ENCODE measurements at regions of chr12 and their contacts with region 1.

Region 1: GRCh38 chr12:100573292-100574186 is at the start of gene GAS2L3:
- DNase-seq: peak; percentile 91
- H3K4me3 ChIP-seq: peak within 1 kb of the TSS; percentile 57 to 66 (median 62)
- H3K27ac ChIP-seq: peak within 1 kb of the TSS; percentile 77 to 90 (median 87)
- H3K4me1 ChIP-seq: peaks cover 0 to 26% (median 10%) of the 10 kb centered on the region in 4 donors
- H3K27me3 ChIP-seq: no peaks in the 10 kb centered on the region
- CTCF ChIP-seq: no peak
- EP300 ChIP-seq: no peak
- POLR2A ChIP-seq: peak; percentile 91
- total RNA-seq, gene GAS2L3: 0.80 to 15.7 (median 7.6) TPM

Region 2: GRCh38 chr12:100632445-100632892 is 58.9 kb after region 1 on chr12:
- in situ Hi-C with region 1: no loop called
- intact Hi-C with region 1: no loop called
- DNase-seq: no peak
- H3K4me3 ChIP-seq: no peak overlapping the region
- H3K27ac ChIP-seq: peak overlapping the region in 3 of 4 donors; percentile 42 to 61 (median 57)
- H3K4me1 ChIP-seq: peaks cover 0 to 18% (median 7%) of the 10 kb centered on the region in 4 donors
- H3K27me3 ChIP-seq: no peaks in the 10 kb centered on the region
- CTCF ChIP-seq: no peak
- EP300 ChIP-seq: no peak
- POLR2A ChIP-seq: no peak

Region 3: GRCh38 chr12:100668945-100669536 is 95.5 kb after region 1 on chr12:
- in situ Hi-C with region 1: loop called in 1 of 4 experiments (anchors 25 kb)
- intact Hi-C with region 1: no loop called
- DNase-seq: peak; percentile 80
- H3K4me3 ChIP-seq: no peak overlapping the region
- H3K27ac ChIP-seq: no peak overlapping the region
- H3K4me1 ChIP-seq: no peaks in the 10 kb centered on the region
- H3K27me3 ChIP-seq: no peaks in the 10 kb centered on the region
- CTCF ChIP-seq: peak; percentile 63 to 79 (median 74)
- EP300 ChIP-seq: no peak
- POLR2A ChIP-seq: no peak

Measured in transverse colon (tissue), 4 donors.